ENCODE measurements at regions of chr15 and their contacts with region 1.

Region 1: GRCh38 chr15:101652098-101652782 is at the start of gene TM2D3:
- DNase-seq: peak; percentile 92 to 98 (median 96)
- ATAC-seq: peak; percentile 96
- H3K4me3 ChIP-seq: peak within 1 kb of the TSS; percentile 99
- H3K4me3 Mint-ChIP-seq: peak within 1 kb of the TSS; percentile 88 to 95 (median 94)
- H3K27ac ChIP-seq: peak within 1 kb of the TSS; percentile 91
- H3K27ac Mint-ChIP-seq: peak within 1 kb of the TSS; percentile 87 to 98 (median 96)
- H3K4me1 ChIP-seq: peaks cover 19 to 26% of the 10 kb centered on the region in 2 donors
- H3K4me1 Mint-ChIP-seq: peaks cover 16 to 53% (median 35%) of the 10 kb centered on the region in 7 donors
- H3K27me3 ChIP-seq: no peaks in the 10 kb centered on the region
- H3K27me3 Mint-ChIP-seq: no peaks in the 10 kb centered on the region
- total RNA-seq, gene TM2D3: 54.4 to 105 (median 87.9) TPM

Region 2: GRCh38 chr15:100602064-100602822 is 1050.0 kb before region 1 on chr15 and contains the starts of genes ASB7 and LINS1:
- CTCF ChIA-PET with region 1: no interaction called
- POLR2A ChIA-PET with region 1: no interaction called
- intact Hi-C with region 1: loop called (anchors 1 to 5 kb)
- DNase-seq: peak; percentile 97 to 100 (median 100)
- ATAC-seq: peak; percentile 97
- H3K4me3 ChIP-seq: peak within 1 kb of the TSS; percentile 97
- H3K4me3 Mint-ChIP-seq: no peak within 1 kb of the TSS
- H3K27ac ChIP-seq: peak within 1 kb of the TSS; percentile 91
- H3K27ac Mint-ChIP-seq: peak within 1 kb of the TSS in 6 of 9 donors; percentile 50 to 95 (median 85)
- H3K4me1 ChIP-seq: peaks cover 35 to 52% of the 10 kb centered on the region in 2 donors
- H3K4me1 Mint-ChIP-seq: peaks cover 32 to 68% (median 41%) of the 10 kb centered on the region in 7 donors
- H3K27me3 ChIP-seq: no peaks in the 10 kb centered on the region
- H3K27me3 Mint-ChIP-seq: no peaks in the 10 kb centered on the region
- total RNA-seq, gene ASB7: 15.4 to 27.2 (median 18.9) TPM
- total RNA-seq, gene LINS1: 50.7 to 116 (median 76.9) TPM

Region 3: DNA sequence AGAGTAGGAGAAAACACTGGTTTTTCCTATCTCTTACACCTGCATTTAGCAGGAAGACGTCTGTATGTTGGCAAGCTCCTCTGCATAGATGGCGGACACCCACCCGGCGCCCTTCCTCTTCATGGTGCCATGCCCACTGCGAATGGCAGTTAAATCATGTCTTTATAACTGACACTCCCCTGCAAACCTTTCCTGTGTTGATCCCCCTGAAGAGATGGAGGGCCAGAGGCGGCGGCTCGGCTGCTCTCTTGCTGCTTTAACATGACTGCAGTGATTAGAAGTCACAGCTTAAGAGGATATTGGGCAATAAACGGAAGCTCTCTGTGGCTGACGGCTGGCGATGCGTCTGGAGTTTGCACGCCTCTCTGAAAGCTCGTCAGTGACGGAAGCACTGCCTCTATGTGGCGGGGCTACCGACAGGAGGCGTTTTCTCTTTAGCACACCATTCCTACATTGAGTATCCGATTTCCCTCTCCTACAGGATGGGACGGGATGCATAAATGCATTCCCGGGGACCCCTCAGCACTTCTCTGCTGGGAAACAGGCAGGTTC is 331.7 kb before region 1 on chr15:
- CTCF ChIA-PET with region 1: no interaction called
- POLR2A ChIA-PET with region 1: no interaction called
- intact Hi-C with region 1: loop called in 1 of 2 experiments (anchors 1 kb)
- DNase-seq: peak; percentile 32 to 75 (median 61)
- ATAC-seq: peak; percentile 96
- H3K4me3 ChIP-seq: peak overlapping the region; percentile 68
- H3K4me3 Mint-ChIP-seq: peak overlapping the region; percentile 68 to 91 (median 86)
- H3K27ac ChIP-seq: peak overlapping the region; percentile 55
- H3K27ac Mint-ChIP-seq: peak overlapping the region; percentile 88 to 97 (median 94)
- H3K4me1 ChIP-seq: peaks cover 5 to 8% of the 10 kb centered on the region in 2 donors
- H3K4me1 Mint-ChIP-seq: peaks cover 13 to 14% (median 14%) of the 10 kb centered on the region in 7 donors
- H3K27me3 ChIP-seq: no peaks in the 10 kb centered on the region
- H3K27me3 Mint-ChIP-seq: peaks cover 2 to 20% (median 9%) of the 10 kb centered on the region in 5 donors

Region 4: GRCh38 chr15:101641166-101641764 is 11.0 kb before region 1 on chr15:
- CTCF ChIA-PET with region 1: interaction called, 7 read pairs
- POLR2A ChIA-PET with region 1: interaction called, 24 read pairs
- intact Hi-C with region 1: loop called (anchors 1 kb)
- DNase-seq: peak; percentile 40 to 75 (median 68)
- ATAC-seq: peak; percentile 84
- H3K4me3 ChIP-seq: no peak overlapping the region
- H3K4me3 Mint-ChIP-seq: peak overlapping the region in 3 of 10 donors; percentile 16 to 57 (median 27)
- H3K27ac ChIP-seq: peak overlapping the region; percentile 52
- H3K27ac Mint-ChIP-seq: peak overlapping the region in 8 of 9 donors; percentile 78 to 93 (median 85)
- H3K4me1 ChIP-seq: peaks cover 10 to 19% of the 10 kb centered on the region in 2 donors
- H3K4me1 Mint-ChIP-seq: peaks cover 18 to 43% (median 27%) of the 10 kb centered on the region in 7 donors
- H3K27me3 ChIP-seq: no peaks in the 10 kb centered on the region
- H3K27me3 Mint-ChIP-seq: no peaks in the 10 kb centered on the region

Region 5: DNA sequence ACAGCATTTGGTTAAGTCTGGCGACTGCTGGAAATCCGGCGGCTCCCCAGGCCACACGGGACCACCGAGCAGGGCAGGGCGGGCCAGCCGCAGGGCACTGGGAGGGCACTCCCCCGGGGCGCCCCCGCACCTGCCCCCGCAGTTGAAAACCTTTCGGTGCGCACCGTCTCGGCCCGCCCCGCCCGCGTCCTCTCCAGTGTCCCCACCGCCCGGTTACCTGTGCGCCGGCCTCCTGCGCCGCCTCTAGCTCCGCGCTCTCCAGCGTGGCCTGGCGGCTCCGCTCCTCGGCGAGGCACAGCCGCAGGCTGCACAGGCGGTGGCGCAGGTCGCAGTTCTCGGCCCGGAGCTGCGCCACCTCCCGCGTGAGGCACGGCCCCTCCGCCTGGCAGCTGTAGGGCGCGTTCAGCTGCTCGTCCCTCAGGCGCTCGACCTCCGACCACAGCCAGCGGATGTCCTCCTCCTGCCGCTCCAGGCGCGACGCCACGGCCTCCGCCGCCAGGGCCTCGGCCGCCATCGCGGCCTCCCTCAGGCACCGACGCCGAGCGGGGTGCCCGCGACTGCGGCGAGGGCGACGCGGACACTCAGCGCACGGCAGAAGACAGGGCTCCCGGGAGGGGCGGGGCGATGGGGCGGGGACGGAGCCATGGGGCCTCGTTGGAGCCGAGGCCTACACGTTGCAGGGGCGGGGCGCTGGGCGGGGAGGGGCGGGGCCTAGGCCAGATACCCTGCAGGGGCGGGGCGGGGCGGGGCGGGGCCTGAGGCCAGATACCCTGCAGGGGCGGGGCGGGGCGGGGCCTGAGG is 71.8 kb after region 1 on chr15 and contains the start of gene TARS3:
- CTCF ChIA-PET with region 1: no interaction called
- POLR2A ChIA-PET with region 1: interaction called, 4 read pairs
- intact Hi-C with region 1: loop called (anchors 1 kb)
- DNase-seq: peak; percentile 84 to 97 (median 90)
- ATAC-seq: peak; percentile 97
- H3K4me3 ChIP-seq: peak within 1 kb of the TSS; percentile 77
- H3K4me3 Mint-ChIP-seq: peak within 1 kb of the TSS; percentile 79 to 97 (median 91)
- H3K27ac ChIP-seq: peak within 1 kb of the TSS; percentile 88
- H3K27ac Mint-ChIP-seq: peak within 1 kb of the TSS; percentile 83 to 97 (median 91)
- H3K4me1 ChIP-seq: peaks cover 5 to 11% of the 10 kb centered on the region in 2 donors
- H3K4me1 Mint-ChIP-seq: peaks cover 16 to 42% (median 35%) of the 10 kb centered on the region in 7 donors
- H3K27me3 ChIP-seq: no peaks in the 10 kb centered on the region
- H3K27me3 Mint-ChIP-seq: peaks cover 0 to 3% (median 0%) of the 10 kb centered on the region in 5 donors
- total RNA-seq, gene TARS3: 20.5 to 42.6 (median 23.6) TPM

Measured in naive thymus-derived CD4-positive, alpha-beta T cell (primary cell).